Psoas muscle (tissue), 8 donors: ENCODE measurements at regions of chr14 and their contacts with region 1.

Region 1: DNA sequence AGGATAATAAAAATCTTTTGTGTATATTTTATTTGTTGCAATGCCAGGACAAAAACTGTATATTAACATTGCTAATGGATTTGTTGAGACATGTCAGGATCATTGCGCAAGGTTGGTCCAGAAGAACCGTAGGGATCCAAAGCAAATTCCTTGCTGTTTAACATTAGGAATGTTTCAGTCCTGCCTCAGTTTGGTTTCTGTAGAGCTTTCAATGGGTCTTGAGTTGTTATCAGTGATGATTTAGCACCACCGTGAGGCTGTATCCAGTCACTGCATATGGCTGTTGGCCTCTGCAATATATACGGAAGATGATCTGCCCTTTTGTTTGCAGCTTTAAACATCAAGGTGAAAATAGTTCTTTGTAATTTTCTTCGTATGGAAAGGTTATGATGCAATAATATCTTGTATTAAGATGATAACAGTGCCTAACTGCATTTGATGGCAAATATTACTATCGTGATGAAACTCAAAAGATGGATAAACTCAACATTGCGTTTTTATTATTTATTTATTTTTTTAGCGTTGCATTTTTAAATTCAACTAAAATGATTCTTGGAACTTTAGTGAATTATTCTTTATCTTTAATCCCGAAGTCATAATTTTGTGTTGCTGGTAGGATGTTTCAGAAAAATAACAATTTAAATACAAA is 231.2 kb downstream of the AKAP6 start:
- DNase-seq: peak in 1 of 2 donors; percentile 18
- ATAC-seq: peak; percentile 68 to 87 (median 82)
- H3K4me3 ChIP-seq: no peak overlapping the region
- H3K27ac ChIP-seq: peak overlapping the region; percentile 24
- H3K4me1 ChIP-seq: peaks cover 50% of the 10 kb centered on the region
- H3K27me3 ChIP-seq: no peaks in the 10 kb centered on the region
- CTCF ChIP-seq: peak; percentile 80

Region 2: DNA sequence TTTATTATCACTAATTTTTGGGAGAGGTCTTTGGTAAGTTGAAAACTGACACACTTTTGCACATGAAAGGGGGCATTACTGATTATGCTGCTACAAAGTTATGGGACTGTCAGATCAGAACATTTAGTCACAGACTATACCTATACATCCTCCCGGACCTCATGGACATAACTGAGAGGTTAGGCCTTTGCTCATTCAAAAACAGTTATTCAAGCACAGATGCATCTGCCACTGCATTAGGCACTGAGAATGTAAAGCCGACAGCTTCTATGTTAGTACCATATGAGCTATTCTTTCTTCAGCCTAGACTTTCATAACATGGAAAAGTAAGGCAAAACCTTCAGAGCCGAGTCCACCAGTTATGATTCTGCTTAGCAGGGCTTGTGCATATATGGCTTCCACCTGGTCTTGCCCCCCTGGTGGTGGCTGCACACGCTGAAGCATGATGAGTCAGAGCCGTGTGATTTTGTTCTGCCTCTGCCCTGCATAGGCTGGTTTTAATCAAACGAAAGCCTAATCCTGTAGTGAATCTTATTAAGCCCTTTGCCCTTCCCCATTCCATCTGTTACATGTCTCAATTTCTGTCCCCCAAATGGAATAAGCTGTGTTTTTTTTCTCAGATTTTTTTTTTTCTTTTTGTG is 335.5 kb before region 1 on chr14:
- intact Hi-C with region 1: loop called in 1 of 2 experiments (anchors 10 kb)
- DNase-seq: peak; percentile 30 to 55
- ATAC-seq: peak; percentile 91 to 98 (median 97)
- H3K4me3 ChIP-seq: no peak overlapping the region
- H3K27ac ChIP-seq: peak overlapping the region; percentile 25
- H3K4me1 ChIP-seq: peaks cover 9% of the 10 kb centered on the region
- H3K27me3 ChIP-seq: no peaks in the 10 kb centered on the region
- CTCF ChIP-seq: peak; percentile 45

Region 3: GRCh38 chr14:32494609-32495434 is 65.5 kb before region 1 on chr14:
- intact Hi-C with region 1: loop called in 1 of 2 experiments (anchors 10 kb)
- DNase-seq: peak; percentile 20 to 59
- ATAC-seq: peak; percentile 86 to 89 (median 87)
- H3K4me3 ChIP-seq: peak overlapping the region; percentile 73
- H3K27ac ChIP-seq: peak overlapping the region; percentile 95
- H3K4me1 ChIP-seq: peaks cover 39% of the 10 kb centered on the region
- H3K27me3 ChIP-seq: no peaks in the 10 kb centered on the region
- CTCF ChIP-seq: no peak

Region 4: GRCh38 chr14:32693114-32693513 is 132.8 kb after region 1 on chr14:
- intact Hi-C with region 1: no loop called
- DNase-seq: no peak
- ATAC-seq: peak; percentile 48 to 68 (median 62)
- H3K4me3 ChIP-seq: no peak overlapping the region
- H3K27ac ChIP-seq: no peak overlapping the region
- H3K4me1 ChIP-seq: peaks cover under 1% of the 10 kb centered on the region
- H3K27me3 ChIP-seq: no peaks in the 10 kb centered on the region
- CTCF ChIP-seq: no peak